ENCODE measurements at regions of chr7 and their contacts with region 1.

Region 1: DNA sequence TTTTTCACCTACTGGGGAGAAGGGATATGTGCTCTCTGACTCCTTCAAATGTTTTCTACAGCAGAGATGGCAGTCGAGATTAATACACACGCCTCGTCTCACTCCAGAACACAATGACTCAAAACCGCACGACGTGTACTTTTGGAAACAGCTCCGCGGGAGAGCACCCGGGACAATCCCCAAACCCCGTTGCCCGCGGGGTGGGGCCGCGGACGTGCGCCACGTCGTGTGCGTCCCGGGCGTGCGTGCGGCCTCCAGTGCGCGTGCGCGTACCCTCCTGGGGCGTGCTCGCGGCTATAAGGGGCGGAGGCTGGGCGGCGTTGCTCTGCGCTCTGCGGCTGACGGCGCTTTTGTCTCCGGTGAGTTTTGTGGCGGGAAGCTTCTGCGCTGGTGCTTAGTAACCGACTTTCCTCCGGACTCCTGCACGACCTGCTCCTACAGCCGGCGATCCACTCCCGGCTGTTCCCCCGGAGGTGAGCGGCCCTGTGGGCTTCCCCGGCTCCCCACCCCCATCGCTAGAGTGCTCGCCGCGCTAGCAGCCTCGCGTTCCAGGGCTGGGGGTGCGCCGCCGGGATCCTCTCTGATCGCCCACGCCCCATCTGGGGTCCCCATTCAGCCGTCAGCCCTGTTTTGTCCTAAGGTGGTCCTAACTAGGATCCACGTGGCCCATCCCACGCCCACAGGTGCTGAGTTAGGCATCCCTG is at the start of gene HILPDA:
- DNase-seq: peak; percentile 98
- total RNA-seq, gene HILPDA: 14.0 TPM

Region 2: GRCh38 chr7:128176696-128177095 is 279.0 kb before region 1 on chr7:
- intact Hi-C with region 1: no loop called
- DNase-seq: no peak

Region 3: DNA sequence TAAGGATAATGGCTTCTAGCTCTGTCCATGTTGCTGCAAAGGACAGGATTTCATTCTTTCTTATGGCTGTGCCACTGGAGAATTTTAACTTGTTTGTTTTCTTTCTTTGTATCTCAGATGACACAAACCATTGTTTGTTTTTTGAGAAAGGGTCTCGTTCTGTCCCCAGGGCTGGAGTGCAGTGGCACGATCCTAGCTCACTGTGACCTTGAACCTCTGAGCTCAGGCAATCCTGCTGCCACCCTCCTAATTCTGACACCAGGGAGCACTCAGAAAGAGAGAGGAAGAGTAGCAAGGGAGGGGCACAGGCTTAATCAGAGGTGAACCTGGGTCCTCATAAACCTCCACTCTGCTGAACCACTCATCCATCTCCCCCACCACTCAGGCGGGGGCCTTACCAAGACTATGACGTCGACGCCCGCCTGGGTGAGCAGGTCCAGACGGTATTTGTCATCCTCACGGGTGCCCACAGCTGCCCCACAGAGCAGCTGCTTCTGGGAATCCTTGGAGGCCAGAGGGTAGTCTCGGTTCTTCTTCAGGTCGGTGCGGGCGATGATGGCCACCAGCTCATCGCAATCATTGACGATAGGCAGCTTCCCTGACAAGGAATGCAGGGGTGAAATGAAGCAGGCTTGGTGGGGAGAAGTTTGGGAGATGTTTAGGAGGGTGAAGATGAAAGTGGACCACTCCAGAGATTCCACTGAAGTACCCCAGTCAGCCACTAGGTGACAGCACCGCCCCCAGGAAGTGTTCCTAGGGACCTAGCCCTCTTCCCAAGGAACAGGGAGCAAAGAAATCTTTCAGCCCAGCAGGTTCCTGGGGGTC is 57.5 kb before region 1 on chr7:
- intact Hi-C with region 1: loop called (anchors 2 kb)
- DNase-seq: peak; percentile 86

Measured in cardiac septum (tissue), 1 donor.